ENCODE measurements at regions of chr1 and their contacts with region 1.

Region 1: GRCh38 chr1:119475866-119476439 is 31.1 kb upstream of the HSD3B1 start:
- ATAC-seq: peak in 7 of 8 experiments; percentile 41 to 89 (median 65)
- H3K4me3 ChIP-seq: no peak overlapping the region
- H3K27ac ChIP-seq: no peak overlapping the region
- H3K4me1 ChIP-seq: no peaks in the 10 kb centered on the region

Region 2: DNA sequence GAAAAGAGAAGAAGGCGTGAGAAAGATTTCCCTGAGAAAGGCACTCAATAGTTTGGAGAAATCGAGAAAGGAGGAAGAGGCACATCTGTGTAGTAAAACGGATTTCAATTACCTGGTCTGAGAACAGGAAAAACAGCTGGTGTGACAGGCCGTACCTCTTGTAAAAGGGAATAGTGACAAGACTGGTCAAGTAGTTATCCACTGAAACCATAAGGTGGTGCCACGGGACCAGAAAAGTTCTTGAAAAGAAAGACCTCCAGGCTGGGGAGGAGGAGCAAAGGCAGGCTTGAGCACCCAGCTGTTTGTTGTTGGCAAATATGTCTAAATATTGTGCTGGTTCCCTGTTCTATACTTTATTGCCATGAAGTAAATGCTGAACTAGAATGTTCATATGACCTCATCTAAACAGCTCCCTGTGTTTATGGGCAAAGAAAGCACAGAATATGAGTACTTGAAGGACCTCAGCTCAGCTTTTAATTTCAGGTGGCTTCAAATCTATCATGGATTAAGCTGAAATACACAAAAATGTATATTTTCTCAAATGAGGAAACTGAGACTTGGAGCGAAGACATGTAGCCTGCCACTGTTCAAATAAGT is 103.4 kb before region 1 on chr1:
- in situ Hi-C with region 1: loop called in 1 of 9 experiments (anchors 10 kb)
- ATAC-seq: peak in 5 of 8 experiments; percentile 33 to 96 (median 81)
- H3K4me3 ChIP-seq: no peak overlapping the region
- H3K27ac ChIP-seq: no peak overlapping the region
- H3K4me1 ChIP-seq: no peaks in the 10 kb centered on the region